ENCODE measurements at regions of chr3 and their contacts with region 1.

Region 1: DNA sequence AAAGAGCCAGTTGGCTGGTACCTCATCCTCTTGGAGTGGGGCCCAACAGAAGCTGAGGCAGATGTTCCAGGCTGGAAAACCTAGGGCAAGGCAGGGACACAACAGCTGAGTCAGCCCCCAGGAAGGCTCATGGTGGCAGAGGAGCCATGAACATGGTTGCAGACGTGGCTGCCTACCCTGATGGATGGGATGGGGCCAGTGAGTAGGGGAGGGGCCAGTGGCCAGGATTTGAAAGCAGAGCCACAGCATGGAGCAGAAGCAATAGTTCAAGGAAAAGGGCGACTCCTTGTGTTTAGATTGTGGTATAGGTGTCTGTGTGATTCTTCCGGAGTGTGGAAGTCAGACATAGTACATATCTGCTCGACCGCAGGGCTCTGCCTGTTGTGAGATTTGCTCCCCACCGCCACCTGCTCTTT is 24.2 kb downstream of the PXYLP1 start:
- DNase-seq: no peak
- H3K4me3 ChIP-seq: no peak overlapping the region
- H3K27me3 ChIP-seq: no peaks in the 10 kb centered on the region; the same call in 1 of the 2 replicates
- CTCF ChIP-seq: peak; percentile 26; the same call in 1 of the 2 replicates

Region 2: GRCh38 chr3:141243271-141243707 is 12.6 kb before region 1 on chr3:
- CTCF ChIA-PET with region 1: interaction called, 11 read pairs
- POLR2A ChIA-PET with region 1: no interaction called
- DNase-seq: no peak
- H3K4me3 ChIP-seq: no peak overlapping the region
- H3K27me3 ChIP-seq: no peaks in the 10 kb centered on the region
- CTCF ChIP-seq: no peak

Measured in BJ (cell line).